Activated CD8-positive, alpha-beta T cell treated with anti-CD3 and anti-CD28 coated beads, Interleukin-2, amount 10 ng/mL, durations not matched to agents 7 days and 5 days (primary cell): ENCODE measurements at regions of chr3 and their contacts with region 1.

Region 1: GRCh38 chr3:107660306-107660976 is 137.7 kb downstream of the BBX start:
- DNase-seq: no peak
- ATAC-seq: no peak
- H3K4me3 Mint-ChIP-seq: no peak overlapping the region
- H3K27ac Mint-ChIP-seq: no peak overlapping the region
- H3K4me1 Mint-ChIP-seq: peaks cover 11% of the 10 kb centered on the region
- H3K27me3 Mint-ChIP-seq: no peaks in the 10 kb centered on the region

Region 2: GRCh38 chr3:107740992-107741896 is 80.8 kb after region 1 on chr3:
- CTCF ChIA-PET with region 1: interaction called, 11 read pairs
- POLR2A ChIA-PET with region 1: no interaction called
- DNase-seq: no peak
- ATAC-seq: no peak
- H3K4me3 Mint-ChIP-seq: no peak overlapping the region
- H3K27ac Mint-ChIP-seq: no peak overlapping the region
- H3K4me1 Mint-ChIP-seq: no peaks in the 10 kb centered on the region
- H3K27me3 Mint-ChIP-seq: no peaks in the 10 kb centered on the region

Region 3: GRCh38 chr3:107816107-107816506 is 155.7 kb after region 1 on chr3:
- CTCF ChIA-PET with region 1: no interaction called
- POLR2A ChIA-PET with region 1: no interaction called
- DNase-seq: no peak
- ATAC-seq: no peak
- H3K4me3 Mint-ChIP-seq: no peak overlapping the region
- H3K27ac Mint-ChIP-seq: no peak overlapping the region
- H3K4me1 Mint-ChIP-seq: no peaks in the 10 kb centered on the region
- H3K27me3 Mint-ChIP-seq: peaks cover 13% of the 10 kb centered on the region